ENCODE measurements at regions of chr1 and their contacts with region 1.

Region 1: GRCh38 chr1:167342846-167343245 is 122.2 kb downstream of the POU2F1 start:
- DNase-seq: peak; percentile 53
- H3K4me3 Mint-ChIP-seq: no peak overlapping the region
- H3K27ac Mint-ChIP-seq: no peak overlapping the region
- H3K4me1 Mint-ChIP-seq: peaks cover 18% of the 10 kb centered on the region
- H3K27me3 Mint-ChIP-seq: no peaks in the 10 kb centered on the region
- CTCF ChIP-seq: peak; percentile 45

Region 2: DNA sequence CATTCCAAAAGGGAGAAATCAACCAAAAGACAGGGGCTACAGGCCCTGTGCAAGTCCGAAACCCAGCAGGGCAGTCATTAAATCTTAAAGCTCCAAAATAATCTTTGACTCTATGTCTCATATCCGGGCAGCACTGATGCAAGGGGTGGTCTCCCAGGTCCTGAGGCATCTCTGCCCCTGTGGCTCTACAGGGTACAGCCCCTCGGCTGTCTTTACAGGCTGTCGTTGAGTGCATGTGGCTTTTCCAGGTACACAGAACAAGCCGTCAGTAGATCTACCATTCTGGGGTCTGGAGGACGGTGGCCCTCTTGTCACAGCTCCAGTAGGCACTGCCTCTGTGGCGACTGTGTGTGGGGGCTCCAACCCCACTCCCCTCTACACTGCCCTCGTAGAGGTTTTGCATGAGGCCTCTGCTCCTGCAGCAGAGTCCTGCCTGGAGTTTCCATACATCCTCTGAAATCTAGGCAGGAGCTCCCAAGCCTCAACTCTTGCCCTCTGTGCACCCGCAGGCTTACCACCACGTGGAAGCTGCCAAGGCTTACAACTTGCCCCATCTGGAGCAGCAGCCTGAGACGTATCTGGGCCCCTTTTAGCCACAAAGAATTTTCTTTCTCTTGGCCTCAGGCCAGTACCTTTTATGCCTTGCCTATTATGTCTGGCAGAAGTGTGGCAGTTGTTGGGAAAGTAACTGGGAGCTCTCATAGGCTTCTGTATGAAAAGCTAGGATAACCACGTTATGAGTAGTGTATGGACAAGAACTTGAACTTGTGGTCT is 69.6 kb before region 1 on chr1:
- CTCF ChIA-PET with region 1: interaction called, 127 read pairs
- POLR2A ChIA-PET with region 1: interaction called, 14 read pairs
- intact Hi-C with region 1: loop called (anchors 1 kb)
- DNase-seq: peak; percentile 86
- H3K4me3 Mint-ChIP-seq: no peak overlapping the region
- H3K27ac Mint-ChIP-seq: peak overlapping the region; percentile 23
- H3K4me1 Mint-ChIP-seq: peaks cover 42% of the 10 kb centered on the region
- H3K27me3 Mint-ChIP-seq: no peaks in the 10 kb centered on the region
- CTCF ChIP-seq: no peak

Region 3: DNA sequence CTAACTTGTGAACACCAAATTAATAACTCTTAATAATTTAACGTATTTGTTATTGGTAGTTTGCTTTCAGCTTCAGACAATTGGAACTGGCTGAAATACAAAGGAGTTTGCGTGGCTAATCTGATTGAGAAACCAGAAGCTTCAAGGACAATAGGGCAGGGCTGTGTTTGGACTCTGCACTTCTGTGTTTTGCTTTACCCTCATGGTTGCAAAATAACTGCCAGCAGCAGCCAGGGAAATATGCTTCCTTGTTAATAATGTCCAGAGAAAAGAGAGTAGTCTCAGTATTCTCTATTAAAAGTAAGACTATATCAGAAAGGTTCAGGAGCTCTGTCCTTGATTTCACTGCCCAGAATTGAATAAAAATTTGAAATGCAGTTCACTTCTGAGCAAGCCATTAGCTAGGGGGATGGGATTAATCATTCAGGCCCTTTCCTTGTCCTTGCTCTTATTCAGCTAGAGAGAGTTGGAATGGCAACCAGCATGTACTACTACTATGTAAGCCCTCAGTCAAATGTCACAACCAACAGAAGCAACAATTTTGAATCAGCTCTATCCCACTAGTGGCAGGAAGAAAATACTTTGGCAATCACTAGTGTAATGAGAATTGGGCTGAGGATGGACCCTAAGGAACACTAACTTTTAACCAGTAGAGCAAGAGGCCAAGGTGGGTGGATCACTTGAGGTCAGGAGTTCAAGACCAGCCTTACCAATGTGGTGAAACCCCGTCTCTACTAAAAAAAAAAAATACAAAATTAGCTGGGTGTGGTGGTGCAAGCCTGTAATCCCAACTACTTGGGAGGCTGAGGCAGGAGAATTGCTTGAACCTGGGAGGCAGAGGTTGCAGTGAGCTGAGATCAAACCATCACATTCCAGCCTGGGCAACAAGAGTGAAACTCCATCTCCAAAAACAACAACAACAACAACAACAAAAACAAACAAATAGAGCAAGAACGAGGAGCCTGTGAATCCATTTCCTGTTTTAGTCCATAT is 45.3 kb before region 1 on chr1:
- CTCF ChIA-PET with region 1: interaction called, 10 read pairs
- POLR2A ChIA-PET with region 1: interaction called, 3 read pairs
- intact Hi-C with region 1: no loop called
- DNase-seq: peak; percentile 84
- H3K4me3 Mint-ChIP-seq: peak overlapping the region; percentile 25
- H3K27ac Mint-ChIP-seq: peak overlapping the region; percentile 86
- H3K4me1 Mint-ChIP-seq: peaks cover 22% of the 10 kb centered on the region
- H3K27me3 Mint-ChIP-seq: no peaks in the 10 kb centered on the region
- CTCF ChIP-seq: no peak

Region 4: DNA sequence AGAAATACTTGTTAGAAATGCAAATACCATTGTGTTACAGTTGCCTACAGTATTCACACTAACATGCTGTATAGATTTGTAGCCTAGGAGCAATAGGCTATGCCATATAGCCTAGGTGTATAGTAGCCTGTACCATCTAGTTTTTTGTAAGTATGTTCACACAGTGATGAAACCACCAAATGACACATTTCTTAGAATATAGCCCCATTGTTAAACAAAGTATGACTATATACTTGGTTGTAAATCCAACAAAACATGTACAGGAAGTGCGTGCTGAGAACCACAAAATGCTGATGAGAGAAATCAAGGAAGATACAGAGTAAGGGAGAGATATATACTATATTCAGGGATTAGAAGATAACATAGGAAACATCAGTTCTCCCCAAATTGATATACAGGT is 30.0 kb before region 1 on chr1:
- CTCF ChIA-PET with region 1: interaction called, 10 read pairs
- POLR2A ChIA-PET with region 1: interaction called, 4 read pairs
- intact Hi-C with region 1: no loop called
- DNase-seq: no peak
- H3K4me3 Mint-ChIP-seq: no peak overlapping the region
- H3K27ac Mint-ChIP-seq: no peak overlapping the region
- H3K4me1 Mint-ChIP-seq: peaks cover 10% of the 10 kb centered on the region
- H3K27me3 Mint-ChIP-seq: no peaks in the 10 kb centered on the region
- CTCF ChIP-seq: no peak

Region 5: DNA sequence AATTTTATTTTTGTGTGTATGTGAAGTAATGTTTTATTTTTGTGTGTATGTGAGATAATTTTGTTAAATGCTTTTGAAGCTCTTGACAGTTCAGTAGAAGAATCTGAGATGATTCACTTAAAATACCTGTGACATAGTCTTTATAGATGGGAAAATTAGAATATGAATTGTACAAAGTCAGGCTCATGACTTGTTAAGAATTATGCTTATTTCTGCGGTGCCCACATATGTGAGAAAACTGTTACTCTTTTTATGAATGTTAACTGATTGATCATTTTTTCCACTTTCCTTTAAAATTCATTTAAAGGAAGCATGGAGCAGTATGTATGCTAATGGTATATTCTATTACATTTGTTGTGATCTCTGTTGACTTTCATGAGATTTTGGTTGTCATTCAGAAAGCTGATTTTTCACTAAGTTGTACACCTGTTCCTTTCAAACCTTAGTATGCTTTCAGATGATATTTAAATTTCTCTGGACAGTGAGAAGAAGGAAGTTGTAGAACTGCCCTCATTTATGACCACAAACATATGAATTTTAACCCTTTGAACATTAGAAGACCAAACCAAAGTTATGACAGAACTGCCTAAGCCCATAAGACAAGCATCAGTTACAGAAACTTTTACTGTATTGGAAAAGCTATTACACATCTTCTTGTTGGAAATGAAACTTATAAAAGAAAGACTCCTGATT is 12.1 kb before region 1 on chr1:
- CTCF ChIA-PET with region 1: interaction called, 12 read pairs
- POLR2A ChIA-PET with region 1: interaction called, 4 read pairs
- intact Hi-C with region 1: no loop called
- DNase-seq: no peak
- H3K4me3 Mint-ChIP-seq: no peak overlapping the region
- H3K27ac Mint-ChIP-seq: no peak overlapping the region
- H3K4me1 Mint-ChIP-seq: peaks cover 12% of the 10 kb centered on the region
- H3K27me3 Mint-ChIP-seq: no peaks in the 10 kb centered on the region
- CTCF ChIP-seq: no peak